ENCODE measurements at regions of chr5 and their contacts with region 1.

Region 1: DNA sequence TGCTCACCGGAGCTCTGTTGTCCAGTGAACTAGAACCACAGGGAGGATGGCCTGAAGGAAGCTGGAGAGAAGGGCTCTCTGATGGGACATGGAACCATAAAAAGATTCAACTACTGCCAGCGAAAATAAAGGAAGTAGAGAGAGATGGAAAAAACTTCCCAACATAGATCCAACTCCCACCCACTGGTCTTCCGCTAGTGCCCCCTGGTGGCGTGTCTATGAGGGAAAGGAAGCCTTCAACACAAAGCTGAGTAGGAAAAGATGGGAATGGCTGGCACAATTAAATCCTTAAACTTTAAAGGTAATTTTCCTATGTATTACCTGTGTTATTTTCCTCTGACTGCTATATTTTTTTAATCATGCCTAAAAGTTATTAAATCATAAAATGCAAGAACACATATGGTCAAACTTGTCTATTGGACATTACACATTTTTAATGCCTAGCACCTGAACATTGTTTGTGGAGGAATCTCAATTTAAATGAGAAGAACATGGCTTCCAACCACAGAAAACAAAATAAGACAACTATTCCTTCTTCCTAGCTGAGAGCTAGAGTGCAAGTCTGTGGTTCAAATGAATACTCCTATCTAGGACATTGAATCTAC is 51.5 kb downstream of the CEP120 start:
- DNase-seq: no peak
- H3K4me3 ChIP-seq: no peak overlapping the region
- H3K27ac ChIP-seq: no peak overlapping the region
- H3K27me3 ChIP-seq: no peaks in the 10 kb centered on the region
- CTCF ChIP-seq: peak; percentile 56

Region 2: GRCh38 chr5:122515709-122516431 is 855.8 kb before region 1 on chr5:
- CTCF ChIA-PET with region 1: interaction called, 22 read pairs
- POLR2A ChIA-PET with region 1: no interaction called
- DNase-seq: peak; percentile 57
- H3K4me3 ChIP-seq: no peak overlapping the region
- H3K27ac ChIP-seq: no peak overlapping the region
- H3K27me3 ChIP-seq: peaks cover 5% of the 10 kb centered on the region
- CTCF ChIP-seq: peak; percentile 85

Region 3: GRCh38 chr5:123610665-123611405 is 239.2 kb after region 1 on chr5:
- CTCF ChIA-PET with region 1: interaction called, 14 read pairs
- POLR2A ChIA-PET with region 1: no interaction called
- DNase-seq: peak; percentile 36
- H3K4me3 ChIP-seq: no peak overlapping the region
- H3K27ac ChIP-seq: no peak overlapping the region
- H3K27me3 ChIP-seq: no peaks in the 10 kb centered on the region
- CTCF ChIP-seq: peak; percentile 99

Measured in AG04450 (cell line).